MCF 10A (cell line): ENCODE measurements at regions of chr5 and their contacts with region 1.

Region 1: DNA sequence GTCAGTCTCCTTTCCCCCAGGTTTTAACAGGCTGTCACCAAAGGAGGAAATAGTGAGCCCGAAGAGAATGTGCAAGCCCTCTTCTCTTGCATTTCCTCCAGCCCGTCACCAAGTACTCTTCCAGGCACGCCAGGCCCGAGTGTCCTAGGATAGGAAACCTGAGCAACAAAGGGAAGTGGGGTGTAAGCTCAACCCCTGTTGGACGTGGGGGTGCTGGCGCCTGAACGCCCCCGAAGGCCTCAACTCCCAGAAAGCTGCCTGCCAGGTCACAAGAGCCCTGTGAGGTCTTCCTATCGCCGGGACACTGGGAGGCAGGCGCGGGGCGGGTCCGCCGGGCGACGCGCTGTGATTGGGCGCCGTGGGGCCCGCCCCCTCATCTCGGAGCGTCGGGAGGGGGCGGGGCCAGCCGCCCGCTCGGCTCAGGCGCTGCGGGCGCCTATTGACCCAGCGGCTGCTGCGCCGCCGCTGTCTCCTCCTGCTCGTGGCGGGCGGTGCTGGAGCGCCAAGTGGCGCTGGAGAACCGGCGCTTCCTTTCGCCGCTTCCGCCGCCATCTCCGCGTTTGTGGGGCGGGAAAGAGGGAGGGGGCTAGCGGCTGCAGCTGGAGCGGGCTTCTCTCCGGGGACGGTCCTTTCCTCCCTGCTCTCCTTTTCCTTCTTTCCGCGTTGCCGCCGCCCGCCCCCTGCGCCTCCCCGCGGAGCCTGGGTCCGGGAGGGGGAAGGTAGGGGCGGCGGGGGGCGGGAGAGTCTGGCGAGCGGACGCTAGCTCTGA is 572 bp upstream of the MAN2A1 start:
- DNase-seq: peak; percentile 91
- H3K4me3 Mint-ChIP-seq: peak overlapping the region; percentile 94
- H3K27ac Mint-ChIP-seq: peak overlapping the region; percentile 88
- H3K4me1 Mint-ChIP-seq: peaks cover 26% of the 10 kb centered on the region
- H3K27me3 Mint-ChIP-seq: no peaks in the 10 kb centered on the region
- CTCF ChIP-seq: no peak

Region 2: DNA sequence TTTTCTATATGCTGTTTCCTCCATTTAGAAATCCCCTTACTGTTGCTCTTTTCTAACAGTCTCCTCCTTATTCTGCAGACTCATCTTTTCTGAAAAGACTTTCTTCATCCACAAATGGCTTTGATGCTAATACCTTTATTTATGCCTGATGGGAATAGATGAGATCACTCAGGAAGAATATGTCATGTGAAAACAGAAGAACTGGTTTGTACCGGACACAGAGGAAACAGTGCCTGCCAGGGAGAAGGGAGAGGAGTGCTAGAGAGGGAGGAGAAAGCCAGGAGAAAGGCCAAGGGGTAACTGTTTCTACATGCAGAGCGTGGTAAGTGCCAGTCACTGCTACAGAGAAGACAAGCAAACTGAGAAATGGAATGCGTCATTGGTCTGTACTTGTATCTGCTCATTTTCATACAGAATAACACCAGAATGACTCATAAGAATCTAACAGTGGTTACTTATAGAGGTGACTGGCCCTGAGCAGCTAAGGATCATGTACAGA is 233.5 kb before region 1 on chr5:
- CTCF ChIA-PET with region 1: no interaction called
- POLR2A ChIA-PET with region 1: no interaction called
- intact Hi-C with region 1: loop called (anchors 5 kb)
- DNase-seq: peak; percentile 99
- H3K4me3 Mint-ChIP-seq: peak overlapping the region; percentile 8
- H3K27ac Mint-ChIP-seq: peak overlapping the region; percentile 72
- H3K4me1 Mint-ChIP-seq: peaks cover 7% of the 10 kb centered on the region
- H3K27me3 Mint-ChIP-seq: no peaks in the 10 kb centered on the region
- CTCF ChIP-seq: no peak

Region 3: DNA sequence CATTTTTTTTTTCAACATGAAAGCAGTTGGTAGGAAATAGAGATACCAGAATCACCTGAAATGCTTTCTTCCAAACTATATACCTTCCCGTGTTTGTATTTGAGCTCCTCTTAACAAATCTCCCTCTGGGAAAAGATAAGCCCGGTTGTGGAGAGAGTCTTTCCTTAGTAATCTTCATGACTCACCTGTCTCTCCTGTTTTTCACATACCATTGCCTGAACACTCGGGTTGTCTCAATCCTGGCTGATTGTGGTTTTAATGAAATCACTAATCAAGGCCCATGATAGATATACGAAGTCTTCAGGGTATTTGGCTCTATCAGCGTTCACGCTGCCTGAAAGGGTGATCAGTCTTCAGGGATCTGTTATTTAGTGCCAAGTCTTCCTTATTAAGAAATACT is 137.3 kb after region 1 on chr5:
- CTCF ChIA-PET with region 1: no interaction called
- POLR2A ChIA-PET with region 1: interaction called, 3 read pairs
- intact Hi-C with region 1: loop called (anchors 5 kb)
- DNase-seq: peak; percentile 55
- H3K4me3 Mint-ChIP-seq: no peak overlapping the region
- H3K27ac Mint-ChIP-seq: peak overlapping the region; percentile 71
- H3K4me1 Mint-ChIP-seq: peaks cover 24% of the 10 kb centered on the region
- H3K27me3 Mint-ChIP-seq: no peaks in the 10 kb centered on the region
- CTCF ChIP-seq: no peak

Region 4: GRCh38 chr5:109987970-109988369 is 298.8 kb after region 1 on chr5:
- CTCF ChIA-PET with region 1: no interaction called
- POLR2A ChIA-PET with region 1: no interaction called
- intact Hi-C with region 1: no loop called
- DNase-seq: no peak
- H3K4me3 Mint-ChIP-seq: no peak overlapping the region
- H3K27ac Mint-ChIP-seq: peak overlapping the region; percentile 65
- H3K4me1 Mint-ChIP-seq: peaks cover 23% of the 10 kb centered on the region
- H3K27me3 Mint-ChIP-seq: no peaks in the 10 kb centered on the region
- CTCF ChIP-seq: no peak

Region 5: DNA sequence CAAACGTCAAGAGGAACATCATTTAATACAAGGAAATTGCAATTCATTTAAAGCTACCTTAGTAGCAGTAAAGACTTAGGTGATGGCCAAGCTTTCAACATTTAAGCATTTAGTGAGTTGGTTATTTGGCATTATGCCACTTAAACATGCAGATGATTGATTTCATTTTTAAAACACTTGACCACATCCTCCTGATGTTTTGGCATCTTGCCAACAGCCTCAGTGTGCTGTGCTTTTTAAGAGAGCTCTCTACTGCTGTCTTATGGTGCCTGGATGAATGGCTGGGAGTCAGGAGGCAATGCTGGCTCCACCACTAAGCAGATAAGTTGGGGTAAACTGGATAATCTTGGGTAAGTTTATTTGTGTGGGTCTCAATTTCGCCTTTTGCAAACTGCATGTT is 365.1 kb after region 1 on chr5:
- CTCF ChIA-PET with region 1: interaction called, 5 read pairs
- POLR2A ChIA-PET with region 1: interaction called, 13 read pairs
- intact Hi-C with region 1: loop called (anchors 5 kb)
- DNase-seq: peak; percentile 95
- H3K4me3 Mint-ChIP-seq: no peak overlapping the region
- H3K27ac Mint-ChIP-seq: peak overlapping the region; percentile 33
- H3K4me1 Mint-ChIP-seq: peaks cover 30% of the 10 kb centered on the region
- H3K27me3 Mint-ChIP-seq: no peaks in the 10 kb centered on the region
- CTCF ChIP-seq: peak; percentile 36

Region 6: GRCh38 chr5:110342683-110343082 is 653.5 kb after region 1 on chr5:
- CTCF ChIA-PET with region 1: interaction called, 4 read pairs
- POLR2A ChIA-PET with region 1: no interaction called
- intact Hi-C with region 1: loop called (anchors 2 kb)
- DNase-seq: no peak
- H3K4me3 Mint-ChIP-seq: no peak overlapping the region
- H3K27ac Mint-ChIP-seq: no peak overlapping the region
- H3K4me1 Mint-ChIP-seq: peaks cover 4% of the 10 kb centered on the region
- H3K27me3 Mint-ChIP-seq: no peaks in the 10 kb centered on the region
- CTCF ChIP-seq: no peak

Region 7: DNA sequence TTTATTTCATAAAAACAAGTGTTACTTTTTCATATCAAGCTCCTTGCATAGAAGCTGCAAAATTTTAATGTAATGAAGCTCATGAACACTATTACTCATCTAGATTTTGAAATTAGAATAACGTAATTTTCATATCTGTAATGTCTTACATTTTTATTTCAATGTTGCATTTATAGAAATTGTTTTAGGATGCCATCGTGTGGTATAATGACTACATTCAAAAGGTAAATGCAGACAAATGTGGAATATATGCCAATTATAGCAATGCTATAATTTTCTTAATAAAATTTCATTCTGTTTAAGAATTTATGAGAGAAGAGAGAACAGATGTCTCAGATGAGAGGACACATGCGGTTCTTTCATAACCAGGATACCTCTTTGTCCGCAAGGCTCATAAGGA is 807.1 kb after region 1 on chr5:
- CTCF ChIA-PET with region 1: interaction called, 4 read pairs
- POLR2A ChIA-PET with region 1: interaction called, 3 read pairs
- intact Hi-C with region 1: loop called (anchors 2 kb)
- DNase-seq: peak; percentile 13
- H3K4me3 Mint-ChIP-seq: no peak overlapping the region
- H3K27ac Mint-ChIP-seq: no peak overlapping the region
- H3K4me1 Mint-ChIP-seq: no peaks in the 10 kb centered on the region
- H3K27me3 Mint-ChIP-seq: peaks cover 5% of the 10 kb centered on the region
- CTCF ChIP-seq: peak; percentile 28